HCT116 (cell line): ENCODE measurements at regions of chr7 and their contacts with region 1.

Region 1: DNA sequence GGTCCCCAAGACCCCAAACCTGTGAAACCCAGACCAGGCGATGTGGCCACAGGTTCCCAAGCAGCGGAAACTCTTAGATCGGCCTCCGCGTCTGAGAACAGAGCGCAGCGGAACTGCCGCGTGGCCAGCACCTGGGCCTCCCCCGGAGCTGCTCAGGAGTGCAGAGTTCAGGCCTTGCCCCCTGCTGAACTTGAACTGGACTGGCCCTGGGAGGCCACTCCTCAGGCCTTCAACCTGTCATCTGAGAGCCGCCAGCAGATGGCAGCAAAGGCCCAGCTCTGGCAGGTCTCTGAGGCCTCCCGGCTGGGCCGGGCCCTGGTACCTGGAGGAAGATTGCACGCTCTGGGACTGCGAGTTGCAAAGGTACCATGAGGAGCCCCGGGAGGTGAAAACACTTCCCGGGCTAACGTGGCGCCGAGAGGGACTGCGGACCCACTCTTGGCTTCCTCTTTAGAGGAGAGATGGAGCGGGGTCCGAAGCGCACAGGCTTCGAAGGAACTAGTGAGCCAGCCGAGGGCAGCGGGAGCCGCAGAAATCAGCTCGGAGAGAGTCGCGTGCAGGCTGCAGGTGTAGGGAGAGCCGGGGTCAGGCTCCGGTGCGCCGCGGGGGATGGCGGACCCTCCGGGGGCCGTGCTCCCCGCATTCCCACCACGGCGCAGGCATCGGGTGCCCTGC is 89.1 kb downstream of the PAXIP1 start:
- DNase-seq: peak; percentile 53
- ATAC-seq: peak; percentile 99
- H3K4me3 ChIP-seq: no peak overlapping the region
- H3K27ac ChIP-seq: no peak overlapping the region
- H3K4me1 ChIP-seq: no peaks in the 10 kb centered on the region
- H3K27me3 ChIP-seq: 0 out of 2 replicates have a peak, but pooled peaks cover 3% of the 10 kb centered on the region
- CTCF ChIP-seq: peak; percentile 71 to 86 (median 84)
- POLR2A ChIP-seq: no peak
- RAD21 ChIP-seq: peak; percentile 89

Region 2: GRCh38 chr7:155356323-155357105 is 442.7 kb after region 1 on chr7:
- CTCF ChIA-PET with region 1: interaction called, 8 read pairs
- POLR2A ChIA-PET with region 1: no interaction called
- RAD21 ChIA-PET with region 1: no interaction called
- intact Hi-C with region 1: loop called (anchors 1 kb)
- DNase-seq: peak; percentile 31
- ATAC-seq: peak; percentile 87
- H3K4me3 ChIP-seq: no peak overlapping the region
- H3K27ac ChIP-seq: no peak overlapping the region
- H3K4me1 ChIP-seq: no peaks in the 10 kb centered on the region
- H3K27me3 ChIP-seq: peaks cover 8% of the 10 kb centered on the region; the same call in 1 of the 2 replicates
- CTCF ChIP-seq: peak; percentile 55 to 66 (median 66)
- POLR2A ChIP-seq: no peak
- RAD21 ChIP-seq: peak; percentile 63

Region 3: GRCh38 chr7:155769701-155770100 is 855.9 kb after region 1 on chr7:
- CTCF ChIA-PET with region 1: no interaction called
- POLR2A ChIA-PET with region 1: no interaction called
- RAD21 ChIA-PET with region 1: no interaction called
- intact Hi-C with region 1: loop called (anchors 5 kb)
- DNase-seq: no peak
- ATAC-seq: no peak
- H3K4me3 ChIP-seq: no peak overlapping the region
- H3K27ac ChIP-seq: no peak overlapping the region
- H3K4me1 ChIP-seq: no peaks in the 10 kb centered on the region
- H3K27me3 ChIP-seq: no peaks in the 10 kb centered on the region
- CTCF ChIP-seq: no peak
- POLR2A ChIP-seq: no peak
- RAD21 ChIP-seq: no peak